ENCODE measurements at regions of chr10 and their contacts with region 1.

Region 1: GRCh38 chr10:16529853-16530252 is 8.2 kb upstream of the C1QL3 start:
- DNase-seq: no peak
- ATAC-seq: no peak
- H3K4me3 ChIP-seq: no peak overlapping the region
- H3K4me3 Mint-ChIP-seq: no peak overlapping the region
- H3K27ac ChIP-seq: no peak overlapping the region
- H3K27ac Mint-ChIP-seq: no peak overlapping the region
- H3K4me1 ChIP-seq: no peaks in the 10 kb centered on the region
- H3K4me1 Mint-ChIP-seq: no peaks in the 10 kb centered on the region
- H3K27me3 ChIP-seq: no peaks in the 10 kb centered on the region
- H3K27me3 Mint-ChIP-seq: peaks cover 3 to 21% of the 10 kb centered on the region in 2 donors

Region 2: GRCh38 chr10:16472828-16473227 is 57.0 kb before region 1 on chr10:
- CTCF ChIA-PET with region 1: no interaction called
- POLR2A ChIA-PET with region 1: interaction called in 1 of 2 experiments, 11 read pairs
- DNase-seq: no peak
- ATAC-seq: no peak
- H3K4me3 ChIP-seq: no peak overlapping the region
- H3K4me3 Mint-ChIP-seq: no peak overlapping the region
- H3K27ac ChIP-seq: no peak overlapping the region
- H3K27ac Mint-ChIP-seq: no peak overlapping the region
- H3K4me1 ChIP-seq: no peaks in the 10 kb centered on the region
- H3K4me1 Mint-ChIP-seq: peaks cover 17 to 20% (median 17%) of the 10 kb centered on the region in 3 donors
- H3K27me3 ChIP-seq: no peaks in the 10 kb centered on the region
- H3K27me3 Mint-ChIP-seq: no peaks in the 10 kb centered on the region

Region 3: DNA sequence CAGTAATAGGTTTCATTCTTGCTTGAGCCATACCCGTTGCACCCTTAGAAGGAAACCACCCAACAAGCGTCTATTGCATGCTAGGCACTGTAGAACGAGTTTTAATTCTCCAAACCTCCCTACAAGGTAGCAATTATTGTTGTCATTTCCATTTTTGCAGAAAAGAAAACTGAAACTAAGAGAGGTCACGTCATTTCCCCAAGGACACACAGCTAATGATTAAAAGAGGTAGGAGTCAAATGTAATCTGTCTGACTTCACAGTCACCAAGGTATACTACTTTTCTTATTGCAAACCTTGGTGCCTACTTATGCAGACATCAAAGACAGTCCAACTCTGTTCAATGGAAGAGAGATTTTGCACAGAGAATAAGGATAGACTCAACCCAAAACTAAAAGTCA is 40.9 kb after region 1 on chr10:
- CTCF ChIA-PET with region 1: no interaction called
- POLR2A ChIA-PET with region 1: no interaction called
- DNase-seq: no peak
- ATAC-seq: no peak
- H3K4me3 ChIP-seq: no peak overlapping the region
- H3K4me3 Mint-ChIP-seq: no peak overlapping the region
- H3K27ac ChIP-seq: no peak overlapping the region
- H3K27ac Mint-ChIP-seq: no peak overlapping the region
- H3K4me1 ChIP-seq: no peaks in the 10 kb centered on the region
- H3K4me1 Mint-ChIP-seq: peaks cover 0 to 8% (median 7%) of the 10 kb centered on the region in 3 donors
- H3K27me3 ChIP-seq: peaks cover 2 to 6% of the 10 kb centered on the region in 2 experiments
- H3K27me3 Mint-ChIP-seq: peaks cover 16 to 26% of the 10 kb centered on the region in 2 donors

Region 4: GRCh38 chr10:16653224-16653623 is 123.4 kb after region 1 on chr10:
- CTCF ChIA-PET with region 1: no interaction called
- POLR2A ChIA-PET with region 1: no interaction called
- DNase-seq: no peak
- ATAC-seq: no peak
- H3K4me3 ChIP-seq: no peak overlapping the region
- H3K4me3 Mint-ChIP-seq: no peak overlapping the region
- H3K27ac ChIP-seq: no peak overlapping the region
- H3K27ac Mint-ChIP-seq: no peak overlapping the region
- H3K4me1 ChIP-seq: no peaks in the 10 kb centered on the region
- H3K4me1 Mint-ChIP-seq: peaks cover 0 to 10% (median 3%) of the 10 kb centered on the region in 3 donors
- H3K27me3 ChIP-seq: no peaks in the 10 kb centered on the region
- H3K27me3 Mint-ChIP-seq: no peaks in the 10 kb centered on the region